Transverse colon (tissue), 4 donors: ENCODE measurements at regions of chr2 and their contacts with region 1.

Region 1: GRCh38 chr2:191566344-191566743 is 111.6 kb upstream of the NABP1 start:
- DNase-seq: peak; percentile 73
- H3K4me3 ChIP-seq: no peak overlapping the region
- H3K27ac ChIP-seq: peak overlapping the region in 2 of 4 donors; percentile 29 to 55
- H3K4me1 ChIP-seq: peaks cover 0 to 38% (median 8%) of the 10 kb centered on the region in 4 donors
- H3K27me3 ChIP-seq: no peaks in the 10 kb centered on the region
- CTCF ChIP-seq: peak; percentile 60 to 73 (median 71)
- EP300 ChIP-seq: no peak
- POLR2A ChIP-seq: no peak

Region 2: DNA sequence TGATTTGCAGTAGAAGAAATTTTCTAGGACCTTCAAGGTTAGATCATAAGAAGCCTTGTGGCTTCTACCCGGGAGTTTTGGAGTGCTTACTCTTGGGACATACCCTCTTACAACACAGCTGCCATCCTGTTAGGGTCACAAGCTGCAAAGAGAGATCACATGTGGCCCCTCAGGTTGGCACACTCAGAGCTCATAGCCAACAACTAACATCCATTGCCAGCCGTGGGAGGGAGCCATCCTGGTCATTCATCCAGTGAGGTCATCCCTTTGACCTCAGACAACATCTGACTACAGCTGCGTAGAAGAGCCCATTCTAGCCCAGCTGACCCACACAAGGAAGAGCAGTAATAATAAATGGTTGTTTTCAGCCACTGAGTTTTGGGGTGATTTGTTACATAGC is 34.7 kb after region 1 on chr2:
- in situ Hi-C with region 1: no loop called
- intact Hi-C with region 1: no loop called
- DNase-seq: no peak
- H3K4me3 ChIP-seq: no peak overlapping the region
- H3K27ac ChIP-seq: no peak overlapping the region
- H3K4me1 ChIP-seq: no peaks in the 10 kb centered on the region
- H3K27me3 ChIP-seq: no peaks in the 10 kb centered on the region
- CTCF ChIP-seq: no peak
- EP300 ChIP-seq: no peak
- POLR2A ChIP-seq: no peak

Region 3: DNA sequence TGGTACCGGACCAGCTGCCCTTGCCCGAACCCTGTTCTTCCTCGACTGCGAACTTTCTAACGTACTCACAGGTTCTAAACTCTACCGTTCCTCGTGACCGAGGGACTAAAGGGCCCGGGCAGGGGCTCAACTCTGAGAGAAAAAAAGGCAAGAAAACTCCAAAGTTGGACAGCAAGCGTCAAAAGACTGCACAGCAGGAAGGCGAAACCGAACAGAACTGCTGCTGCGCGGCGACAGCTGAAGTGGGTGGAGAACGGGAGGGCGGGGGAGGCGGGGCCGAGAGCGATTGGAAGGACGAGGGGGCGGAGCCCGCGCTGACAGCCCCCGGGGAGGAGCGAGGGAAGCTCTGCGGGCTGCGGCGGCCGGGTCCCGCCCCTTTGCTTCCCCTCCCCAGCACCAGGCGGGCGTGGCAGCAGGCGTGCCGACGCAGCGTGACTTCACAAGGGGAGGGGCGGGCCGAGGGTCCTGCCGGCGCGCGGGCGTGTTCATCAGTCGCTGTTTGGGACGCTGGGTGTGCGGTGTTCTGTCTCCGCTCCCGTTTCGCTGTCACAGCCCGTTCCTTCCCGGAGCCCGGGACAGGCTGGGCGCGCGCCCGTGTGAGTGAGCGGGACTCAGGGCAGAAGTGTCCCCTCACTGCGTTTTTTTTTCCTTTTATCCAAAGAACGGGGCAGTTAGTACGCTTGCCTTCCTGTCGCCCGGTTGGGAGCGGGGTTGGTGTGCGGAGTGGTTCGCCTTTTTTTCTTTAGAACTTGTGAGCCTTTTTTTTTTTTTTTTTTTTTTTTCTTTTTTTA is 111.5 kb after region 1 on chr2 and contains the start of gene NABP1:
- in situ Hi-C with region 1: loop called in 1 of 4 experiments (anchors 10 kb)
- intact Hi-C with region 1: no loop called
- DNase-seq: peak; percentile 100
- H3K4me3 ChIP-seq: peak within 1 kb of the TSS; percentile 57 to 80 (median 77)
- H3K27ac ChIP-seq: peak within 1 kb of the TSS; percentile 95 to 98 (median 98)
- H3K4me1 ChIP-seq: peaks cover 4 to 43% (median 7%) of the 10 kb centered on the region in 4 donors
- H3K27me3 ChIP-seq: no peaks in the 10 kb centered on the region
- CTCF ChIP-seq: no peak
- EP300 ChIP-seq: peak; percentile 28
- POLR2A ChIP-seq: peak; percentile 100
- total RNA-seq, gene NABP1: 1.00 to 55.6 (median 33.0) TPM

Region 4: DNA sequence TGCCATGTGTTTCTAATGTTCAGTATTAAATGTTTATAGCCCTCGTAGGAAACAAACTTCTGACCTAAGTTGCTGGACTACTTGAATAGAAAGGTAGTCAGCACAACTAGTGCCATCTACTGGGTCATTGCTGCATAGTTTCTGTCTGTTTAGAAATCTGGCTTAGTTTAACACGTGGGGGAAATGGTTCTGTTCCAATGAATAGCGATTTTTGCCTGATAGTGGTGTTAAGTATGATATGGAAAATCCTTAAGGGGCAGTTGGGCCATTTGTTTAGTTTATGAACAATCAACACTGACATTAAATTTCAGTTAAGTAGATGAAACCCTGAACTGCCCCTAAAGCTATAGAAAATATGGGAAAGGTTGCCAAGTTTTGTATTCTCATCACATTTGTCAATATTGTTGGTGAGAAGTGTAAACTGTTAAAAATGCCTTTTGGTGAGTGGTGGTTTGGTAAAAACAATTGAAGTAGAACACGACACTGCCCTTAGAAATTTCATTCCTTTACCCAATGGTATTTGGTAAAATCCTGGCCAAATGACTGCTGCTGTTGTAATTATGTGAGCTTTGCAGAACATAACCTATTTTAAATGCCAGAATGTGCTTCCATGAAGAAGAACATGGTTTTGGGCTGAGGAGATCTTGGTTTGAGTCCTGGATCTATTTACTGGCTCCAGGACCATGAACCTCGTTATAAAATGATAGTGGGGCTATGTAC is 124.8 kb after region 1 on chr2:
- in situ Hi-C with region 1: loop called (anchors 5 to 10 kb)
- intact Hi-C with region 1: no loop called
- DNase-seq: peak; percentile 59
- H3K4me3 ChIP-seq: no peak overlapping the region
- H3K27ac ChIP-seq: no peak overlapping the region
- H3K4me1 ChIP-seq: peaks cover 0 to 23% (median 15%) of the 10 kb centered on the region in 4 donors
- H3K27me3 ChIP-seq: peaks cover 5% of the 10 kb centered on the region
- CTCF ChIP-seq: peak; percentile 66 to 82 (median 69)
- EP300 ChIP-seq: no peak
- POLR2A ChIP-seq: no peak